ENCODE measurements at regions of chr6 and their contacts with region 1.

Region 1: DNA sequence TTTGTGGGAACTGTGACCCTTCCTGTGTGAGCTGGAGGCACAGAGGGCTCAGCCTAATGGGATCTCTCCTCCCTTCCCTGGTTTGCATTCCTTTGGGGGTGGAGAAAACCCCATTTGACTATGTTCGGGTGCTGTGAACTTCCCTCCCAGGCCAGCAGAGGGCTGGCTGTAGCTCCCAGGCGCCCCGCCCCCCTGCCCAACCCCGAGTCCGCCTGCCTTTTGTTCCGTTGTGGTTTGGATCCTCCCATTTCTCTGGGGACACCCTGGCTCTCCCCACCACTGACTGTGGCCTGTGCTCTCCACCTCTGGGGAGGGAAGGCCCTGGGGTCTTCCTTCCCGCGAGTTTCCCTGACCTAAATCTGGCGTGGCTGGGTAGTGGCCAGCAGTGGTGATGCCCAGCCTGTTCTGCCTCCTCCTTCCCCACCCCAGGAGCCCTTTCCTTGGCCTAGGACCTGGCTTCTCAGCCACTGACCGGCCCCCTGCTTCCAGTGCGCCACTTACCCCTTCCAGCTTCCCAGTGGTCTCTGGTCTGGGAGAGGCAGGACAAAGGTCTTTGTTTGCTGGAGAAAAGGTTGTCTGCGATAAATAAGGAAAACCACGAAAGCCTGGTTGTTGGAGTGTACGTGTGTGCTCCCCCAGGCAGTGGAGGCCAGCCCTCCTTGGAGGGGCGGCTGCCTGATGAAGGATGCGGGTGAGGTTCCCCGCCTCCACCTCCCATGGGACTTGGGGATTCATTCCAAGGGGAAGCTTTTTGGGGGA is 4.9 kb downstream of the VEGFA start:
- DNase-seq: peak; percentile 88
- H3K4me3 Mint-ChIP-seq: peak overlapping the region; percentile 87
- H3K27ac Mint-ChIP-seq: peak overlapping the region; percentile 85
- H3K4me1 Mint-ChIP-seq: peaks cover 45% of the 10 kb centered on the region
- H3K27me3 Mint-ChIP-seq: no peaks in the 10 kb centered on the region
- CTCF ChIP-seq: peak; percentile 98

Region 2: GRCh38 chr6:43786664-43787329 is 11.8 kb after region 1 on chr6:
- CTCF ChIA-PET with region 1: interaction called, 10 read pairs
- intact Hi-C with region 1: no loop called
- DNase-seq: no peak
- H3K4me3 Mint-ChIP-seq: no peak overlapping the region
- H3K27ac Mint-ChIP-seq: peak overlapping the region; percentile 80
- H3K4me1 Mint-ChIP-seq: peaks cover 38% of the 10 kb centered on the region
- H3K27me3 Mint-ChIP-seq: no peaks in the 10 kb centered on the region
- CTCF ChIP-seq: no peak

Region 3: GRCh38 chr6:43838276-43839036 is 63.5 kb after region 1 on chr6:
- CTCF ChIA-PET with region 1: interaction called, 6 read pairs
- intact Hi-C with region 1: loop called (anchors 2 kb)
- DNase-seq: peak; percentile 59
- H3K4me3 Mint-ChIP-seq: no peak overlapping the region
- H3K27ac Mint-ChIP-seq: peak overlapping the region; percentile 9
- H3K4me1 Mint-ChIP-seq: peaks cover 58% of the 10 kb centered on the region
- H3K27me3 Mint-ChIP-seq: no peaks in the 10 kb centered on the region
- CTCF ChIP-seq: peak; percentile 67

Region 4: GRCh38 chr6:43849844-43850243 is 74.9 kb after region 1 on chr6:
- CTCF ChIA-PET with region 1: no interaction called
- intact Hi-C with region 1: no loop called
- DNase-seq: no peak
- H3K4me3 Mint-ChIP-seq: no peak overlapping the region
- H3K27ac Mint-ChIP-seq: no peak overlapping the region
- H3K4me1 Mint-ChIP-seq: peaks cover 48% of the 10 kb centered on the region
- H3K27me3 Mint-ChIP-seq: no peaks in the 10 kb centered on the region
- CTCF ChIP-seq: no peak

Measured in Calu3 (cell line).